SK-N-SH (cell line): ENCODE measurements at regions of chr17 and their contacts with region 1.

Region 1: GRCh38 chr17:17568749-17569195 is 22.7 kb downstream of the PEMT start:
- DNase-seq: peak; percentile 85
- H3K4me3 ChIP-seq: no peak overlapping the region
- H3K27ac ChIP-seq: no peak overlapping the region
- H3K4me1 ChIP-seq: peaks cover 0 to 52% of the 10 kb centered on the region in 2 experiments; a peak in 1 of 4 replicates
- H3K27me3 ChIP-seq: no peaks in the 10 kb centered on the region
- CTCF ChIP-seq: peak; percentile 71
- EP300 ChIP-seq: no peak
- RAD21 ChIP-seq: peak; percentile 71

Region 2: DNA sequence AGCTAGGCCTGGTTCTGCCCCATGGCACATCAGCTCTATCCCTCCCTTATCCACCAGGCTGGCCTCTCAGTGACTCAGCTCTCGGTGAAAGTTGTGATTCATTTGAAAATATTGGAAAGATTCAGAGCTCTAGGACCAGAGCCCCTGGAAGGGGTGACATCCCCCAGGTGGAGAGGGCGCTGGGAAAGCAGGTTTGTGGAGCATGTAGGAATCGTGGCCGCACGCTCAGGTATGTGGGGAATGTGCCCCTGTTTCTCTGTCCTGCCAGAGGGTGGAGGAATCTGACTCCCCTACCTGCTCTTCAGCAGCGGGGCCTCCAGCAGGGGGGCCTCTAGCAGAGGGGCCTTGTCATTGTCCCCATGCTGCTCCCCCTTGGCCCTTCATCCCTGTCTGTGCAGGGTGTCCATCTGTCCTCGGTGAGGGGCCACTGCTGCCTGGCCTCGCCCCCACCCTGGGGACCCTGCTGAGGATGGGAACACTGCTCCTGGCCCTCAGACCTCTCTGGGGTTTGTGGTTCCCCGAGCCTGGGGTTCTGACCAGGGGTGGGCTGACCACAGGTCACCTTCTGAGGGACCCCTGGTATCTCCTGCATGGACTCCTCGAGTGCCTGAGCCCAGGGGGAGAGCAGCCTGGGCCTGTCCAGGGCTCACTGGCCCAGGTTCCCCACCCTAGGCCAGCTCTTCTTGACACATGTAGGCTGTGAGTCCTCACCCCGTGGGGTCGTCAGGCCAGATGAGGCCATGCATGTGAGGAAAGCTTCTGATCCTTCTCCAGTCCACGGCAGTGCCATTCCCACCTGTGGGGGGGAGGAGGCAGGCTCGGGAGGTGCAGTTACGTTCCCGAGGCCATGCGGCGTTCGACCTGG is 218.0 kb before region 1 on chr17:
- CTCF ChIA-PET with region 1: interaction called, 107 read pairs
- POLR2A ChIA-PET with region 1: no interaction called
- DNase-seq: no peak
- H3K4me3 ChIP-seq: no peak overlapping the region
- H3K27ac ChIP-seq: no peak overlapping the region
- H3K4me1 ChIP-seq: peaks cover 0 to 28% of the 10 kb centered on the region in 2 experiments; a peak in 1 of 4 replicates
- H3K27me3 ChIP-seq: no peaks in the 10 kb centered on the region
- CTCF ChIP-seq: no peak
- EP300 ChIP-seq: no peak
- RAD21 ChIP-seq: no peak

Region 3: GRCh38 chr17:17363638-17364337 is 205.0 kb before region 1 on chr17:
- CTCF ChIA-PET with region 1: interaction called, 35 read pairs
- POLR2A ChIA-PET with region 1: no interaction called
- DNase-seq: peak; percentile 16
- H3K4me3 ChIP-seq: no peak overlapping the region
- H3K27ac ChIP-seq: no peak overlapping the region
- H3K4me1 ChIP-seq: no peaks in the 10 kb centered on the region
- H3K27me3 ChIP-seq: no peaks in the 10 kb centered on the region; the same call in 1 of the 2 replicates
- CTCF ChIP-seq: no peak
- EP300 ChIP-seq: no peak
- RAD21 ChIP-seq: no peak

Region 4: GRCh38 chr17:17511881-17512858 is 56.6 kb before region 1 on chr17:
- CTCF ChIA-PET with region 1: interaction called, 42 read pairs
- POLR2A ChIA-PET with region 1: no interaction called
- DNase-seq: no peak
- H3K4me3 ChIP-seq: no peak overlapping the region
- H3K27ac ChIP-seq: no peak overlapping the region
- H3K4me1 ChIP-seq: peaks cover 6 to 37% of the 10 kb centered on the region in 2 experiments; a peak in 2 of 4 replicates
- H3K27me3 ChIP-seq: no peaks in the 10 kb centered on the region
- CTCF ChIP-seq: no peak
- EP300 ChIP-seq: no peak
- RAD21 ChIP-seq: no peak

Region 5: GRCh38 chr17:17545031-17545820 is 23.5 kb before region 1 on chr17:
- CTCF ChIA-PET with region 1: interaction called, 31 read pairs
- POLR2A ChIA-PET with region 1: no interaction called
- DNase-seq: no peak
- H3K4me3 ChIP-seq: no peak overlapping the region
- H3K27ac ChIP-seq: peak overlapping the region in 1 of 2 experiments; percentile 96; a peak in 2 of 4 replicates
- H3K4me1 ChIP-seq: peaks cover 0 to 69% of the 10 kb centered on the region in 2 experiments; a peak in 2 of 4 replicates
- H3K27me3 ChIP-seq: no peaks in the 10 kb centered on the region
- CTCF ChIP-seq: no peak
- EP300 ChIP-seq: no peak
- RAD21 ChIP-seq: no peak

Region 6: DNA sequence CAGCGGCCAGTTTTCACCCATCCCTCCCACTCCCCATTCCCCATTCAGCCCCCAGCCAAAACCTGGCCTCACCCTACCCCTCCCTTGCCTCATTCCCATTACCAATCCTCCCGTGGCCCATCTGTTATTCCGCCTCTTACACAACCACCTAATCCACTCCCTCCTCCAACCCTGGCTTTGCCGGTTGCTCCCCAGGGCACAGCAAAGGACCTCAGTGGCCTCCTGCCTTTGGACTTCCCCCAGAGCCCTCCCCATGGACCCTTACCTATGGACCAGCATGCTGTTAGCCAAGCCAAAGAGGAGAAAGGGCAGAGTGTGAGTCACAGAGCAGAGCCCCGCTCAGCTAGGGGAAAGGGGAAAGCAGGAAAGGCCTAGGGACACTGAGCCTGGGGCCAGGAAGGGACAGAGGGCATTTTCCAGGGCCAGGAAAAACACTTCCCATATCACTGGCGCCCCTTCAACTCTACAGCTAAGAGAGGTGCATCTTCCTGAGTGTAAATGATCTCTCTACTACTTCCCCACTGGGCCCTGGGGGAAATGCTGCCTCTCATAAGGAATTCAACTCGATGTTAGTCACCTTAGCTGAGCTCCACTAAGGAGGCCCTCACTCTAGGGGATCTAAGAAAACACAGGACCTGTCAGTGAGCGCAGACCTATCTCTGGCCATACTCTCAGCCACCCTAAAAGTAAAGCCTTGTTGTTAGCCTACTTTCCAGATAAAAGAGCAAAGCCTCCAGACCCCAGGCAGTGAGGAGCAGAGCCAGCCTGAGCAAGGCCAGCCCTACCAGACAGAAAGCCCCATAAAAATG is 12.1 kb after region 1 on chr17:
- CTCF ChIA-PET with region 1: interaction called, 20 read pairs
- POLR2A ChIA-PET with region 1: no interaction called
- DNase-seq: no peak
- H3K4me3 ChIP-seq: no peak overlapping the region
- H3K27ac ChIP-seq: no peak overlapping the region
- H3K4me1 ChIP-seq: peaks cover 0 to 24% of the 10 kb centered on the region in 2 experiments; a peak in 1 of 4 replicates
- H3K27me3 ChIP-seq: no peaks in the 10 kb centered on the region
- CTCF ChIP-seq: no peak
- EP300 ChIP-seq: no peak
- RAD21 ChIP-seq: no peak

Region 7: DNA sequence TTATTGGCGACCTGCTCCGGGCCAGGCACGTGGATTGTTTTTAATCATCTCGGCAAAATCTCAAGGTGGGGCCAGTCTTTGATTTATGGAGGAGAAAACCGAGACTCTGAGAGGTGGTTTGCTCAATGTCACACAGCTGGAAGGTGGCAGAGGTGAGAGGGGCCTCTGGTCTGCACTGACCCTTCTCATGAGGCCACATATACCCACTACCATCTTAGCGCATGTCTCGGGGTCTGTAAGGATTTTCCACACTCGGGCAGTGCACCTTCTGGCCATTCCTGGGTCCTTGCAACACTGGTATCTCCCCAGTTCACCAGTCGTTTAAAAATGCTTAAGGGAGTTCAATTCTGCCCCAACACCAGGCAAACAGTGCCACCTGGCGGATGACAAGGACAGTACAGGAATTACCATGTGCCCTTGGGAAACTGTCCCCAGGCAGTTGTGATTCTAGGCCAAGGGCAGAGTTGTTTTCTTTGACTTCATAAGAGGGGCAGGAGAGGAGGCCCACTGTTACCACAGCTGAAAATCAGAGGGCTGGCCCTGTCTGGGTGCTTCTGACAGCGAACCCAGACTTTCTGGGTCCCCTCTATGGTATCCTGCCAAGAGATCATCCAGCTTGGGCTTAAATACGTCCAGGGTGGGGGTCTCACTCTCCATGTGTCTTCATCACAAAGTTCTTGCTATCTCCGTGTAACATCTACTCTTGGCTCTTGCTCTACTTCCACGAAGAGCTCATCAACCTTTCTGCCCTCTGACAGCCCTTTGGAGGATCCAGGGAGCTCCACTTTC is 73.0 kb after region 1 on chr17:
- CTCF ChIA-PET with region 1: interaction called, 43 read pairs
- POLR2A ChIA-PET with region 1: no interaction called
- DNase-seq: peak; percentile 74
- H3K4me3 ChIP-seq: peak overlapping the region in 1 of 2 experiments; percentile 30; a peak in 1 of 4 replicates
- H3K27ac ChIP-seq: no peak overlapping the region
- H3K4me1 ChIP-seq: no peaks in the 10 kb centered on the region; a peak in 1 of 4 replicates
- H3K27me3 ChIP-seq: no peaks in the 10 kb centered on the region
- CTCF ChIP-seq: peak; percentile 86
- EP300 ChIP-seq: no peak
- RAD21 ChIP-seq: peak; percentile 97

Region 8: DNA sequence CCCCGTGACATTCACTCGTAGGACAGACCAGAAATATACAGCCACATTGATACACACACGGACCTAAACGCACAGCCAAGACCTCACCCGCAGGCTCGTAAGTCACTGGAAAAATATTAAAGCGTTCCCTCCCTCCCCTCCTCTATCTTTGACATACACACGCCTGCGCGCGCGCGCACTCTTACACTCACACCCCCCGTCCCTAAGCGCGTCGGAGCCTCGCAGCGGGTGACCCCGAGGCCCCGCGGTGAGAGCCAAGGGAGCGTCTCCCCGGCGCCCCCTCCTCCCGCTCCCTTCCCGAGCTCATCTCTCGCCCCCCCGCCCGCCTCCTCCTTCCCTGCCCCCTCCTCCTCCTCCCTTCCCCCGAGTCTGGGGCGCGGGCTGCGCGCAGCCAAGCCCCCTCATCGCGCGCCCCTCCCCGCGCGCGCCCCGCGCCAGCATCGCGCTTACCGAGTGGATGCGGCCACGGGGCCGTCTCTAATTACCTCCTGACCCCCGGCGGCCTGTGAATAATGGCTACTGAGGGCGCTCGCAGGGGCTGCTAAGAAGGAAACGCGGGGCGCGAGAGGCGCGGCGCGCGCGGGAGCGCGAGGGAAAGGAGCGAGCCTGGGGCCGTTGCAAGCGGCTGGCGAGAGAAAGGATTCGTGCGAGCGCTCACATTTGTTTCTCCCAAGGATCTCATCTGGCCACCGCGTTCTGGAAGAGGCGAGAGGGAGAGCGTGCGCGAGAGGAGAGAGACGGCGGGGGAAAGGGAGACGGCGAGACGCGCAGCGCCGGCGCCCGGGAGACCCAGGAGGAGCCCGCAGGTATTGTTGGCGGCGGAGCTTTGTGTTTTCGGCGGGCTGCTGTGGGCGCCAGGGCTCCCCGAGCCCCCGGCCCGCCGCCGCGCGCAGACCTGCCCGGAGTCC is 154.8 kb after region 1 on chr17:
- CTCF ChIA-PET with region 1: no interaction called
- POLR2A ChIA-PET with region 1: no interaction called
- DNase-seq: peak; percentile 87
- H3K4me3 ChIP-seq: peak overlapping the region; percentile 53 to 66
- H3K27ac ChIP-seq: peak overlapping the region in 1 of 2 experiments; percentile 83; a peak in 2 of 4 replicates
- H3K4me1 ChIP-seq: peaks cover 6 to 56% of the 10 kb centered on the region in 2 experiments; a peak in 2 of 4 replicates
- H3K27me3 ChIP-seq: no peaks in the 10 kb centered on the region
- CTCF ChIP-seq: no peak
- EP300 ChIP-seq: no peak
- RAD21 ChIP-seq: no peak